Activated T-helper 2 cell treated with anti-CD3 and anti-CD28 coated beads, Interferon-gamma antibody, Interleukin-2, Interleukin-4, amounts not matched to agents 10 μg/mL and 5 μg/mL and 100 μg/mL, durations not matched to agents 14 hours and 24 hours and 36 hours (primary cell): ENCODE measurements at regions of chr4 and their contacts with region 1.

Region 1: DNA sequence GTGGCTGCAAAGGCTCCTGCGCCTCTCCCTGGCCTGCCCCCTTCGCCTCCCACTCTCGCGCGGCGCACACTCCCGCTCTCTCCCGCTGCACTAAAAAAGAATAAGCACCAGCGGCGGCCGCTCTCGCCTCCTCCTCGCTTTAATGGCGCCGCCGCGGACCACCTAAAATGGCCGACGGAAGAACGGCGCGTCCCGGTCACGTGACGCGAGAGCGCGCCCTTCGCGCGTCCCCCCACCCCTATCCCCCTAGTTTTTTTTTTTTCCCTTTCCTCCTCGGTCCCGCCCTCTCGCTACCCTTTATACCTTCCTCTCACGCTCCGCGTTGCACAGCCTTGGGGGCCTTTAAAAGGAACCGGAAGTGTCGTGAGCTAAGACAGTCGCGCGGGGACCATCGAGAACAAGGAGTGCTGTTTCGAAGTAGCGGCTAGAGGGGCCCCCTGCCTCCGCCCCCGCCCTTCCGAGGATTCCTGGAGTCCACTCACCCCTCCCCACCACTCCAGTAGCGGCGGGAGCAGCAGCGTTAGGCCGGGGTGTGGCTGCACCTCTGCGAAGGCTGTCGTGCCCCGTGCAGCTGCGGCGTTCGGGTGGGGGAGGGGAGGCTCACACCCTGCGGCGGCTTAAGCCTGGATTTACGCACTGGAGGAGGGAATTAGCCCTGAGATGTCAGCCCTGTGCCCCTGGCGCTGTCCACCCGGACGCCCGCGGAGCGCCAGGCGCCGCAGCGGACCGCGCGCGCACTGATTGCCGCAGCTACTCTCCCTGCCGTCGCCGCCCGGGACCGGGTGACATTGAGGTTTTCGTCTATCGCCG is at the start of gene HNRNPD:
- DNase-seq: peak; percentile 94
- H3K4me3 Mint-ChIP-seq: peak within 1 kb of the TSS; percentile 95
- H3K27ac Mint-ChIP-seq: peak within 1 kb of the TSS; percentile 96
- H3K4me1 Mint-ChIP-seq: peaks cover 25% of the 10 kb centered on the region
- H3K27me3 Mint-ChIP-seq: no peaks in the 10 kb centered on the region
- total RNA-seq, gene HNRNPD: 461 and 489 TPM in 2 replicates

Region 2: GRCh38 chr4:81343046-81343445 is 1031.0 kb before region 1 on chr4:
- intact Hi-C with region 1: no loop called
- DNase-seq: no peak
- H3K4me3 Mint-ChIP-seq: no peak overlapping the region
- H3K27ac Mint-ChIP-seq: no peak overlapping the region
- H3K4me1 Mint-ChIP-seq: no peaks in the 10 kb centered on the region
- H3K27me3 Mint-ChIP-seq: peaks cover 3% of the 10 kb centered on the region

Region 3: DNA sequence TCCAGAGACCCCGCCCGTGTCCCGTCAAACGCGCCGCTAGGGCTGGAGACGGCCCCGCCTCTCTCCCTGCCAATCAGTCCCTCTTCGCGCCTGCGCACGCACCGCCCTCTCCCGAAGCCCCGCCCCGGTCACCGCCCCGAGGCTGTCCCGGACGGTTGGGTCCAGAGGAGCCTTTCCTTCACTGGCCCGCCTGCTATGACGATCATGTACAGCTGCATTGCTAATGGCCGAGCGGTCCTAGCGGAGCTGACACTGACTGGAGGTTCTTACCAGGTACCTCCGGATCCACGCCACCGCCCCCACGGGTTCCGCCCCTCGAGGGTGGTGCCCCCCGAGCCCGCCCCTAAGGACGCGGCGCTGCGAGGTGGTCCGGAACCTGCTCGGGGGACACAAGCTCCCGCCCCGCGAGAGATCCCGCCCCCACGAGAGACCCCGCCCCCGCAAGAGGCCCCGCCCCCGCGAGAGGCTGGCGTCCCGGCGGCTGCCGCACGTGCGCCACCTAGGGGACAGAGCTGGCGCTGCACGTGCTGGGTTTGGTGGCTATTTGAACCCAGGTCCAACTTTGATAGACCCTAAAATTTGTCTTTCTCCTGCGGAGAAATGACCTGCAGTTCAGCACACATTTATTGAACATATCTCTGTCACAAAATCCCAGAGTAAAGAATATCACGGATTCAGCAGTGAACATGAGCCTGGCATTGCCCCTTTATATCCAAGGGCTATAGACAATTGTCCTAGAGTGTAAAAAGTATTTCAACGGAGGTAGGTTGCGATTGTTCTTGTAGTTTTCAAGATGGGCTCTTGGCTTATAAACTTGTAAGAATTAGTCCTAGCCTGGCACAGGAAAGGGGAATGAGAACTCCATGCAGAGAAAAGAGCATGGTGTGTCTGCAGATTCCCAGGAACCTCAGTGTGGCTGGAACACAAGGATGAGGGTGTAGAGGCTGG is 88.9 kb before region 1 on chr4:
- intact Hi-C with region 1: loop called (anchors 1 kb)
- DNase-seq: peak; percentile 99
- H3K4me3 Mint-ChIP-seq: peak overlapping the region; percentile 76
- H3K27ac Mint-ChIP-seq: no peak overlapping the region
- H3K4me1 Mint-ChIP-seq: peaks cover 12% of the 10 kb centered on the region
- H3K27me3 Mint-ChIP-seq: peaks cover 26% of the 10 kb centered on the region

Region 4: GRCh38 chr4:82352913-82353366 is 21.1 kb before region 1 on chr4:
- intact Hi-C with region 1: loop called (anchors 1 kb)
- DNase-seq: no peak
- H3K4me3 Mint-ChIP-seq: no peak overlapping the region
- H3K27ac Mint-ChIP-seq: peak overlapping the region; percentile 75
- H3K4me1 Mint-ChIP-seq: peaks cover 46% of the 10 kb centered on the region
- H3K27me3 Mint-ChIP-seq: no peaks in the 10 kb centered on the region

Region 5: DNA sequence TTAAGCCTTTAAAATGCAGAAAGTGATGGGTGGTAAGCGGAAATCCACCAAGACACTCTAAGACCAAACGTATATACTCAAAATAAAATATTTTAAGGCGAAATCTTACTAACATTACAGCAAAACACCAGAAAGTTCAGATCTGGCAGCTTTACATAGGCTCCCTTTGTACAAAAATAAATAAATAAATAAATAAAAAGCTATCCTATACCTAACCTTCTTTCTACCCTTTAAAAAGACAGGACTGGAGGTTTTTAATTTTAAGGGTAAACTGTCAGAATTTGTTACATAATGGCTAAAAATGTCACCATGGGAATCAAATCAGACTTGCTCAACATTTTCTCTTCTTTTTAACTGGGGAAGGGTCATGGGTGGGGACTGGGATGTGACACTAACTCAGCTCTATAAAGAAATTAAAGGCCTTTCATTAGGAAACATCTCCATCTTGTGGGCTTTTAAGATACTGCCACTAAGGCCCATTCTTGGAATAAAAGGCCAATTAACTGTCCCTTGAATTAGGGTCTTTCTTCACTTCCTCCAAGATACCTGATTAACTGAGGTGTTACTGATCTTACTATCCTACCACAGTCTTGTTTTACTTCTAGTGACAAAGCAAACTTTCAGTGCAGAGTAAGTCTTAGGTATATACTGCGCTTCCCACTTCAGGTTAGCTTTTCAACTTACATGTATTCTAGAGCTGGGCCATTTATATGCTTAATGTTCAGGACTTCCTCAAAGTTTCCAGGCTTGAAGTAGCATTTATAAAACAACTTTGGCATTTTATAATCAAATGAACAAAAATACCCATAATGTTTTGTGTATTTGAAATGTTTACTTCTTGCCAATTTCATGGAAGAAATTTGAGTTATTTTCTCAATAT is 13.5 kb before region 1 on chr4:
- intact Hi-C with region 1: loop called (anchors 1 kb)
- DNase-seq: no peak
- H3K4me3 Mint-ChIP-seq: no peak overlapping the region
- H3K27ac Mint-ChIP-seq: peak overlapping the region; percentile 28
- H3K4me1 Mint-ChIP-seq: peaks cover 75% of the 10 kb centered on the region
- H3K27me3 Mint-ChIP-seq: no peaks in the 10 kb centered on the region

Region 6: GRCh38 chr4:82430193-82430963 is 56.4 kb after region 1 on chr4 and contains the starts of genes ENOPH1 and HNRNPDL:
- intact Hi-C with region 1: loop called (anchors 1 kb)
- DNase-seq: peak; percentile 96
- H3K4me3 Mint-ChIP-seq: peak within 1 kb of the TSS; percentile 98
- H3K27ac Mint-ChIP-seq: peak within 1 kb of the TSS; percentile 99
- H3K4me1 Mint-ChIP-seq: peaks cover 44% of the 10 kb centered on the region
- H3K27me3 Mint-ChIP-seq: no peaks in the 10 kb centered on the region
- total RNA-seq, gene ENOPH1: 64.5 and 65.9 TPM in 2 replicates
- total RNA-seq, gene HNRNPDL: 470 and 486 TPM in 2 replicates

Region 7: GRCh38 chr4:82890901-82891706 is 517.1 kb after region 1 on chr4 and contains the start of gene SEC31A:
- intact Hi-C with region 1: loop called (anchors 1 kb)
- DNase-seq: peak; percentile 96
- H3K4me3 Mint-ChIP-seq: peak within 1 kb of the TSS; percentile 89
- H3K27ac Mint-ChIP-seq: peak within 1 kb of the TSS; percentile 91
- H3K4me1 Mint-ChIP-seq: peaks cover 43% of the 10 kb centered on the region
- H3K27me3 Mint-ChIP-seq: no peaks in the 10 kb centered on the region
- total RNA-seq, gene SEC31A: 138 and 142 TPM in 2 replicates

Region 8: DNA sequence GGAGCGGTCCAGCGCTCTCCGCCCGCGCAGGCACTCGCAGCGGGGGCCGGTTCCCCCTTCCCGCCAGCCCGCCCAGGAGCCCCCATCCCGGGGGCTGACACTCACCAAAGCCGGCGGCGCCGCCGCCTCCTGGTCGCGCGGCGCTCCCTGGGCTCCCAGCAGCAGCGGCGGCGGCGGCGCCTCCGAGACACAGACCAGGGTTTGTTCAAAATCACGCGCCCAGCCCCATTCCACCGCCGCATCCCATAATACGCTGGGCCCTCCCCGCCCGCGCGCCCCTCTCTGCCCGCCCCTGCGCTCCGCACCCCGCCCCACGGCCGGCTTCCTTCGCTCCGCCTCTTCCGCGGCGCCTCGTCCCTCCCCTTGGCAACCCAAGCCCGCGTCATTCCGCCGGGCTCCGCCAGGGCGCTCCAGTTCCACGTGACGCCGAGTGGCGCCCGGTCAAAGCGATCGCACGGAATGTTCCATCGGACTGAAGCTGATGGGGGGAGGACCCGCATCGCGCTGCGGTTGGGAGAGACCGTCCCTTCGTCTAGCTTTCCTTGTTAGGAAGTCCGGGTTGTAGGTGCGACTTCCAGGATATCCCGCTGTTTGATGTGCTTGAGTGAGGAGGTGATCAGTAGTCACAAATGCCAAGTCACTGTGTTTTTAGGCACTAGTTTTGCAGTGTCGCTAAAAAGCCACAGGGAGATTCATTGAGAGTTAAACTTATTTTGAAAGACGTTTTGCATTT is 638.8 kb after region 1 on chr4:
- intact Hi-C with region 1: loop called (anchors 1 kb)
- DNase-seq: peak; percentile 96
- H3K4me3 Mint-ChIP-seq: peak overlapping the region; percentile 94
- H3K27ac Mint-ChIP-seq: peak overlapping the region; percentile 93
- H3K4me1 Mint-ChIP-seq: peaks cover 36% of the 10 kb centered on the region
- H3K27me3 Mint-ChIP-seq: no peaks in the 10 kb centered on the region

Region 9: GRCh38 chr4:83217721-83218522 is 843.9 kb after region 1 on chr4:
- intact Hi-C with region 1: no loop called
- DNase-seq: peak; percentile 74
- H3K4me3 Mint-ChIP-seq: peak overlapping the region; percentile 56
- H3K27ac Mint-ChIP-seq: peak overlapping the region; percentile 84
- H3K4me1 Mint-ChIP-seq: peaks cover 64% of the 10 kb centered on the region
- H3K27me3 Mint-ChIP-seq: peaks cover 13% of the 10 kb centered on the region